ENCODE measurements at regions of chr1 and their contacts with region 1.

Region 1: GRCh38 chr1:93179886-93180722 is at the start of gene TMED5:
- DNase-seq: peak; percentile 98 to 99
- H3K4me3 ChIP-seq: peak within 1 kb of the TSS; percentile 91 to 99
- H3K27ac ChIP-seq: peak within 1 kb of the TSS; percentile 99 to 100
- H3K4me1 ChIP-seq: peaks cover 0 to 44% (median 18%) of the 10 kb centered on the region in 4 donors
- H3K27me3 ChIP-seq: no peaks in the 10 kb centered on the region
- CTCF ChIP-seq: peak; percentile 30 to 40

Region 2: DNA sequence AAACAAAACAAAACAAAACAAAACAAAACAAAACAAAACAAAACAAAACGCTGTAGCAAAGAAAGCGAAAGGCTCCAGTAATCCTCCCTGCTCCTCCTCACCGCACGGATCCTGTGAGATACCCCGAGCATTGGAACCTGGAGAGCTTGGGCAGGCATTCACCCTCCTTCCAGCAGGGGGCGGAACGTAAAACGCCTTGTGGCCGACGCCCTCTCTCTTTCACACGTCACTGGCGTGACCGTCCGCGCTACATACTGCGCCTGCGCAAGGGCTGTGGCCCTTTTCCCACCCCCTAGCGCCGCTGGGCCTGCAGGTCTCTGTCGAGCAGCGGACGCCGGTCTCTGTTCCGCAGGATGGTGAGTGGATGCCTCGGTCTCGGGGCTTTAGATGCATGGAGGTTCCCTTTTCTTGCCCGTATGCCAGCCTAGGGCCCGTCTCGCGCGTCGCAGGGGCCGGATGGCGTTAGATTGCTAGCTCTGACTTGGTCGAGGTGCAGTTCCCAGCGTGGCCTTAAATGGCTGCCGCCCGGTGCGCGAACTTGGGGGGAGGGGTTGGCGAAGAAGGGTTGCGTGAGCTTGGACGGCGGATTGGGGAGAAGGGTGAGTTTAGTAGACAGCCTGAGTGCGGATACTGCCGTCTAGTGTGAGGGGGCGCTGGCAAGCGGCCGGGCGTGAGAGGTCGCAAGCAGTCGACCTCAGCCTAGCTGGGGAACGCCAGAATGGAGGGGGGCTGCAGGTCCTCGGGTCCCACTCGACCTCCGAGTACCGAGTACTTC is 348.2 kb before region 1 on chr1 and contains the start of gene RPL5:
- intact Hi-C with region 1: loop called (anchors 10 kb)
- DNase-seq: peak; percentile 95 to 97
- H3K4me3 ChIP-seq: peak within 1 kb of the TSS; percentile 75 to 96
- H3K27ac ChIP-seq: peak within 1 kb of the TSS; percentile 87 to 93
- H3K4me1 ChIP-seq: peaks cover 0 to 46% (median 25%) of the 10 kb centered on the region in 4 donors
- H3K27me3 ChIP-seq: no peaks in the 10 kb centered on the region
- CTCF ChIP-seq: peak; percentile 89 to 90

Region 3: DNA sequence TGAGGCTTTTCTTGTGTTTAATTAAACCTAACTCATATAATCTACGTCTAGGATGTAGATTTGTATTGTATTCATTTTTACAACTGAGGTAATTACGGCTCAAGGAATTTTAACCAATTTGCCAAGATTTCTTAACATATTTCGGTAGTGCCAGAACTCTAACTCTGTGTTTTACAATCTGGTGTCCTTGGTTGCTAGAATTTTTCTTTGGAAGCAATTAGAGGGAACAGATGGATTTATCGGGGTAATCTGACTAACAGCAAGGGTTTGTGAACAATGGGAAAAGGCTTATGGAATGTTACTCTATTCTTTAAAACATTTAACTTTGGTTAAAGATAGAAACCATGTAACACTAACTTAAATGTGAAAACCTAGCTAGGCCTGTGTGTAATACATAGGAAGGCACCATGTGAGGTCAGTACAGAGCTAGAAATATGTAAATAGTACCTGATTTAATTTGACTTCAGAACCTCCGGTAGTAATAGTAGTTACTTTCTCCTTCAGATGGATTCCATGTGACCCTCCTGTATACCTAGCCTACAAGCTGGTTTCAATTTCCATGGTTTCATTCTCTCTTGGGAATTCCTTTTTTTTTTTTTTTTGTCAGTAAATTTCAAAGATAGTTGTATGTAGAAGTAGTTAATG is 99.8 kb before region 1 on chr1:
- intact Hi-C with region 1: loop called (anchors 10 kb)
- DNase-seq: no peak
- H3K4me3 ChIP-seq: peak overlapping the region; percentile 68 to 79
- H3K27ac ChIP-seq: peak overlapping the region; percentile 63 to 71
- H3K4me1 ChIP-seq: peaks cover 0 to 27% (median 12%) of the 10 kb centered on the region in 4 donors
- H3K27me3 ChIP-seq: no peaks in the 10 kb centered on the region
- CTCF ChIP-seq: peak; percentile 25 to 26